ENCODE measurements at regions of chr2 and their contacts with region 1.

Region 1: DNA sequence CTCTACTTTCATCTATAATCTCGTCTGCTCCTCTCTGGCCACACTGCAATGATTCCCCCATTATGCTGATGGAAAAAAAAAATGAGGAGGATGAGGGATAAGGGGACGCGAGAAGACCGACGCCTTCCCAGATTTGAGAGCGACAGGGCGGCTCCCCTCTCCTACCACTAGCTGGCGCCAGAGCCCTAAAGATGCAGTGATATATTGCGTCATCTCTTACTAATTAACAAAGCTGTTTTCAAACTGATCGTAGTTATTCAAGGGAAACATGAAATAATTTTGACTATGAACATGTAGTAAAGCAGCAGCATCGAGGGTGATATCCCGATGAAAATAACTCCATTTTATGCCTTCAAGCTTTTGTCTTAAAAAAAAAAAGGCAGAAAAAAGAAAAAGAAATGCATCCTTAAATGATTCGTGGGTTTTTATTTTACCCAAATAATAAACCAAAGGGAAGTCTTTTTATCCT is 48.0 kb upstream of the HNRNPA3 start:
- DNase-seq: peak; percentile 92
- H3K4me3 ChIP-seq: peak overlapping the region; percentile 12 to 49 (median 45)
- H3K27ac ChIP-seq: peak overlapping the region; percentile 81 to 88 (median 86)
- H3K4me1 ChIP-seq: peaks cover 0 to 18% (median 12%) of the 10 kb centered on the region in 4 donors
- H3K27me3 ChIP-seq: no peaks in the 10 kb centered on the region
- CTCF ChIP-seq: peak; percentile 99 to 100 (median 100)
- EP300 ChIP-seq: no peak
- POLR2A ChIP-seq: no peak

Region 2: GRCh38 chr2:176789751-176790150 is 374.9 kb before region 1 on chr2:
- intact Hi-C with region 1: no loop called
- DNase-seq: no peak
- H3K4me3 ChIP-seq: no peak overlapping the region
- H3K27ac ChIP-seq: no peak overlapping the region
- H3K4me1 ChIP-seq: no peaks in the 10 kb centered on the region
- H3K27me3 ChIP-seq: no peaks in the 10 kb centered on the region
- CTCF ChIP-seq: no peak
- EP300 ChIP-seq: no peak
- POLR2A ChIP-seq: no peak

Region 3: GRCh38 chr2:177263451-177264208 is 99.0 kb after region 1 on chr2:
- intact Hi-C with region 1: loop called (anchors 1 kb)
- DNase-seq: peak; percentile 99
- H3K4me3 ChIP-seq: peak overlapping the region; percentile 86 to 99 (median 99)
- H3K27ac ChIP-seq: peak overlapping the region; percentile 90 to 100 (median 100)
- H3K4me1 ChIP-seq: peaks cover 0 to 48% (median 45%) of the 10 kb centered on the region in 4 donors
- H3K27me3 ChIP-seq: no peaks in the 10 kb centered on the region
- CTCF ChIP-seq: peak; percentile 88 to 91 (median 90)
- EP300 ChIP-seq: peak in 2 of 4 donors; percentile 71 to 88
- POLR2A ChIP-seq: peak; percentile 53 to 54

Region 4: GRCh38 chr2:177332041-177332991 is 167.7 kb after region 1 on chr2:
- intact Hi-C with region 1: loop called (anchors 1 kb)
- DNase-seq: peak; percentile 80
- H3K4me3 ChIP-seq: peak overlapping the region in 1 of 4 donors; percentile 12
- H3K27ac ChIP-seq: peak overlapping the region; percentile 12 to 78 (median 69)
- H3K4me1 ChIP-seq: peaks cover 0 to 17% (median 5%) of the 10 kb centered on the region in 4 donors
- H3K27me3 ChIP-seq: no peaks in the 10 kb centered on the region
- CTCF ChIP-seq: peak; percentile 52 to 79 (median 64)
- EP300 ChIP-seq: no peak
- POLR2A ChIP-seq: no peak

Region 5: GRCh38 chr2:177618255-177619253 is 453.9 kb after region 1 on chr2:
- intact Hi-C with region 1: loop called (anchors 5 kb)
- DNase-seq: peak; percentile 95
- H3K4me3 ChIP-seq: peak overlapping the region; percentile 54 to 75 (median 69)
- H3K27ac ChIP-seq: peak overlapping the region; percentile 79 to 95 (median 92)
- H3K4me1 ChIP-seq: peaks cover 0 to 8% (median 6%) of the 10 kb centered on the region in 4 donors
- H3K27me3 ChIP-seq: no peaks in the 10 kb centered on the region
- CTCF ChIP-seq: no peak
- EP300 ChIP-seq: no peak
- POLR2A ChIP-seq: no peak

Region 6: DNA sequence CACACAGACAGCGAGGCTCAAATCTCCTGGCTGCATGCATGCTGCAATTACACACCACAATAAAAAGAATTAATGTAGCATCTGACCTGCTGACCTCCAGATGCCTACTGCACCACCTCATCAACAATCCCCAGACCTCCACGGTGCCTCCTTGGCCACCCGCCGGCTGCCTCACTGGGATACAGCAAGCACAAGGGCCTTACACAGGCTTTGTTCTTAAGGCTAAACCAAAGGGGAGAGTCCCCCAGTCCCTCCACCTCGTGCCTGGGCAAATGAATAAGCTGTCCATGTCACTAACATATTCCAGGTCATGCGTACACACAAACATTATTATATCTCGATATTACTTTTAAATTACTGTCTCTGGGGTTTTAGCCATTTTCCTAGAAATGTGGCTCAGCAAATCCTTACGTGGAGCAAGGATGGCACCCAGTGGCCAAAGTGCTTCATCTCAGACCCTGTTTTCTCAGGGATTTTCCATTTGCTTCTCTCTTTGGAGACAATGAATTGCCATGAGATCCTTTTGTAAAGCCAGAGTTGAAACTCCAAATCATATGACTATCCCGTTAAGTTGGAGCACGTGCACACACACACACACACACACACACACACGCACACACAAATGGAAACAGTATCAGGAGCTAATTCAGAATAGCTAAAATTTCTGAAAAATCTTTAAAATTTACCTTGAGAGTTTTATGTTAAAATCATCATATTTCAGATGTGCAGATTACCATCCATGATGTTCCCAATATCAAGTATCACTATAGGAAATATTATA is 594.2 kb after region 1 on chr2:
- intact Hi-C with region 1: loop called (anchors 5 kb)
- DNase-seq: no peak
- H3K4me3 ChIP-seq: no peak overlapping the region
- H3K27ac ChIP-seq: peak overlapping the region in 1 of 4 donors; percentile 23
- H3K4me1 ChIP-seq: peaks cover 0 to 26% (median 20%) of the 10 kb centered on the region in 4 donors
- H3K27me3 ChIP-seq: no peaks in the 10 kb centered on the region
- CTCF ChIP-seq: peak; percentile 13 to 46 (median 33)
- EP300 ChIP-seq: no peak
- POLR2A ChIP-seq: no peak